H1 (cell line): ENCODE measurements at regions of chr16 and their contacts with region 1.

Region 1: GRCh38 chr16:11396241-11397048 is 51.2 kb downstream of the RMI2 start:
- DNase-seq: peak; percentile 60 to 98
- H3K4me3 ChIP-seq: no peak overlapping the region
- H3K27ac ChIP-seq: no peak overlapping the region
- H3K4me1 ChIP-seq: peaks cover 0 to 12% (median 7%) of the 10 kb centered on the region in 4 experiments; a peak in 4 of 7 replicates
- H3K27me3 ChIP-seq: no peaks in the 10 kb centered on the region
- CTCF ChIP-seq: peak; percentile 96 to 97 (median 97)
- EP300 ChIP-seq: no peak
- POLR2A ChIP-seq: no peak
- RAD21 ChIP-seq: peak; percentile 99 to 100

Region 2: GRCh38 chr16:11423315-11424117 is 27.1 kb after region 1 on chr16:
- CTCF ChIA-PET with region 1: interaction called, 11 read pairs
- POLR2A ChIA-PET with region 1: no interaction called
- DNase-seq: no peak
- H3K4me3 ChIP-seq: no peak overlapping the region
- H3K27ac ChIP-seq: no peak overlapping the region
- H3K4me1 ChIP-seq: no peaks in the 10 kb centered on the region; a peak in 1 of 7 replicates
- H3K27me3 ChIP-seq: no peaks in the 10 kb centered on the region
- CTCF ChIP-seq: no peak
- EP300 ChIP-seq: no peak
- POLR2A ChIP-seq: no peak
- RAD21 ChIP-seq: no peak